HCT116 (cell line): ENCODE measurements at regions of chr1 and their contacts with region 1.

Region 1: DNA sequence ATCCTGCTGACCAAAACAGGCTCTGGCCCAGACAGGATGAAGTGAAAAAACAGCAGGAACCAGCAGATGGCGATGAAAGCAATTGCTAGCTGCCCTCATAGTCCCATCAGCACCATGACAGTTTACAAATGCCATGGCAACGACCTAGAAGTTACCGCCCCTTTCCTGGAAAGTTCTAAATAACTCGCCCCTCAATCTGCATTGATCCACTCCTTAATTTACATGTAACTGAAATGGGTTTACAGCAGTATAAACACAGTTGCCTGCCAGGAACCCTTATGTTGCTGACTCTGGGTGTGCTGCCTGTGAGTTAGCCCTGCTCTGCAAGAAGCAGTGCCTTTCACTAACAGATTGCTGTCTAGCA is 65.5 kb upstream of the CR1L start:
- DNase-seq: peak; percentile 68
- ATAC-seq: peak; percentile 100
- H3K4me3 ChIP-seq: no peak overlapping the region
- H3K27ac ChIP-seq: no peak overlapping the region
- H3K4me1 ChIP-seq: no peaks in the 10 kb centered on the region
- H3K27me3 ChIP-seq: peaks cover 9% of the 10 kb centered on the region; the same call in 1 of the 2 replicates
- CTCF ChIP-seq: peak; percentile 73 to 78 (median 75)
- POLR2A ChIP-seq: no peak
- RAD21 ChIP-seq: peak; percentile 71

Region 2: GRCh38 chr1:207486198-207486597 is 93.2 kb before region 1 on chr1:
- CTCF ChIA-PET with region 1: no interaction called
- POLR2A ChIA-PET with region 1: no interaction called
- RAD21 ChIA-PET with region 1: no interaction called
- intact Hi-C with region 1: no loop called
- DNase-seq: no peak
- ATAC-seq: no peak
- H3K4me3 ChIP-seq: no peak overlapping the region
- H3K27ac ChIP-seq: no peak overlapping the region
- H3K4me1 ChIP-seq: no peaks in the 10 kb centered on the region
- H3K27me3 ChIP-seq: no peaks in the 10 kb centered on the region
- CTCF ChIP-seq: no peak
- POLR2A ChIP-seq: no peak
- RAD21 ChIP-seq: no peak

Region 3: GRCh38 chr1:207565546-207566358 is 13.7 kb before region 1 on chr1:
- CTCF ChIA-PET with region 1: interaction called, 16 read pairs
- POLR2A ChIA-PET with region 1: no interaction called
- RAD21 ChIA-PET with region 1: no interaction called
- intact Hi-C with region 1: no loop called
- DNase-seq: peak; percentile 34
- ATAC-seq: peak; percentile 98
- H3K4me3 ChIP-seq: no peak overlapping the region
- H3K27ac ChIP-seq: no peak overlapping the region
- H3K4me1 ChIP-seq: no peaks in the 10 kb centered on the region
- H3K27me3 ChIP-seq: no peaks in the 10 kb centered on the region
- CTCF ChIP-seq: peak; percentile 43 to 48 (median 45); a peak in 5 of 6 replicates
- POLR2A ChIP-seq: no peak
- RAD21 ChIP-seq: peak; percentile 65

Region 4: GRCh38 chr1:207619871-207620542 is 40.6 kb after region 1 on chr1:
- CTCF ChIA-PET with region 1: interaction called, 10 read pairs
- POLR2A ChIA-PET with region 1: no interaction called
- RAD21 ChIA-PET with region 1: no interaction called
- intact Hi-C with region 1: no loop called
- DNase-seq: peak; percentile 34
- ATAC-seq: peak; percentile 98
- H3K4me3 ChIP-seq: no peak overlapping the region
- H3K27ac ChIP-seq: no peak overlapping the region
- H3K4me1 ChIP-seq: peaks cover 0 to 3% of the 10 kb centered on the region in 2 experiments; a peak in 1 of 4 replicates
- H3K27me3 ChIP-seq: no peaks in the 10 kb centered on the region
- CTCF ChIP-seq: peak; percentile 53 to 77 (median 75); a peak in 5 of 6 replicates
- POLR2A ChIP-seq: no peak
- RAD21 ChIP-seq: peak; percentile 41; the same call in 1 of the 2 replicates

Region 5: GRCh38 chr1:207672522-207673130 is 93.2 kb after region 1 on chr1:
- CTCF ChIA-PET with region 1: interaction called, 8 read pairs
- POLR2A ChIA-PET with region 1: no interaction called
- RAD21 ChIA-PET with region 1: no interaction called
- intact Hi-C with region 1: loop called (anchors 1 kb)
- DNase-seq: peak; percentile 45
- ATAC-seq: peak; percentile 99
- H3K4me3 ChIP-seq: no peak overlapping the region
- H3K27ac ChIP-seq: no peak overlapping the region
- H3K4me1 ChIP-seq: no peaks in the 10 kb centered on the region
- H3K27me3 ChIP-seq: no peaks in the 10 kb centered on the region
- CTCF ChIP-seq: peak; percentile 66 to 79 (median 78)
- POLR2A ChIP-seq: no peak
- RAD21 ChIP-seq: peak; percentile 89

Region 6: DNA sequence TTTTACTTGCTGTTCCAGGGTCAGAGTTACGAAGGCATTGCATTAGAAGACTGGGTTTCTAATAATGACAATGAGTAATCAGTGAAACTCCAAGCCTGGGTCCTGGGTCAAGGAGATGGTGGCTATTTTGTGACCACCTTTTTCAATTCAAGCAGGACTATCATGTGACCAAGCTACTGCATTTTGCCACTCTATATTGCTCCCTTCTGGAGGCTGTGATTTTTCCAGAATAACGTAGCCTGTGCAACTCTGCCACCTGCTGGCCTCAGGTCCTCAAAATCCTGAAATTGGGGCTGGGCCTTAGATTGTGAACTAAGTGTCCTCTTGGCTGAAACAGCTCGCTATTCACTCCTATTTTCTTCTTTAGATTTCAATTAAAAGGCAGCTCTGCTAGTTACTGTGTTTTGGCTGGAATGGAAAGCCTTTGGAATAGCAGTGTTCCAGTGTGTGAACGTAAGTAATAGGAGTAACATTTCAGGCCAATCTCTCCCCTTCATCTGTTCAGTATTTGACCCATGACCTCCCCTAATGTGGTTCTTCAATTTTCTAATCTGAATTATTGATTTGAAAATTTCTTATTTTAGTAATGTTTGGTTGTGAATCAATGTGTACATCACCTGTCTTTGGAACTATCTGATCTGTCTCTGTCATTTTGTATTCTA is 119.5 kb after region 1 on chr1:
- CTCF ChIA-PET with region 1: interaction called, 12 read pairs
- POLR2A ChIA-PET with region 1: no interaction called
- RAD21 ChIA-PET with region 1: interaction called, 3 to 5 read pairs
- intact Hi-C with region 1: no loop called
- DNase-seq: peak; percentile 70
- ATAC-seq: peak; percentile 99
- H3K4me3 ChIP-seq: no peak overlapping the region
- H3K27ac ChIP-seq: no peak overlapping the region
- H3K4me1 ChIP-seq: 0 out of 4 replicates have a peak, but pooled peaks cover 0 to 3% of the 10 kb centered on the region in 2 experiments
- H3K27me3 ChIP-seq: no peaks in the 10 kb centered on the region
- CTCF ChIP-seq: peak; percentile 76 to 98 (median 77)
- POLR2A ChIP-seq: no peak
- RAD21 ChIP-seq: peak; percentile 83